ENCODE measurements at regions of chr2 and their contacts with region 1.

Region 1: GRCh38 chr2:60581433-60582282 is 28.2 kb upstream of the BCL11A start:
- DNase-seq: peak; percentile 73
- ATAC-seq: peak; percentile 96
- H3K4me3 Mint-ChIP-seq: no peak overlapping the region
- H3K27ac Mint-ChIP-seq: no peak overlapping the region
- H3K4me1 Mint-ChIP-seq: peaks cover 2% of the 10 kb centered on the region
- H3K27me3 Mint-ChIP-seq: peaks cover 28% of the 10 kb centered on the region

Region 2: GRCh38 chr2:60079562-60079961 is 502.1 kb before region 1 on chr2:
- CTCF ChIA-PET with region 1: no interaction called
- POLR2A ChIA-PET with region 1: no interaction called
- DNase-seq: no peak
- ATAC-seq: no peak
- H3K4me3 Mint-ChIP-seq: no peak overlapping the region
- H3K27ac Mint-ChIP-seq: no peak overlapping the region
- H3K4me1 Mint-ChIP-seq: no peaks in the 10 kb centered on the region
- H3K27me3 Mint-ChIP-seq: no peaks in the 10 kb centered on the region

Region 3: DNA sequence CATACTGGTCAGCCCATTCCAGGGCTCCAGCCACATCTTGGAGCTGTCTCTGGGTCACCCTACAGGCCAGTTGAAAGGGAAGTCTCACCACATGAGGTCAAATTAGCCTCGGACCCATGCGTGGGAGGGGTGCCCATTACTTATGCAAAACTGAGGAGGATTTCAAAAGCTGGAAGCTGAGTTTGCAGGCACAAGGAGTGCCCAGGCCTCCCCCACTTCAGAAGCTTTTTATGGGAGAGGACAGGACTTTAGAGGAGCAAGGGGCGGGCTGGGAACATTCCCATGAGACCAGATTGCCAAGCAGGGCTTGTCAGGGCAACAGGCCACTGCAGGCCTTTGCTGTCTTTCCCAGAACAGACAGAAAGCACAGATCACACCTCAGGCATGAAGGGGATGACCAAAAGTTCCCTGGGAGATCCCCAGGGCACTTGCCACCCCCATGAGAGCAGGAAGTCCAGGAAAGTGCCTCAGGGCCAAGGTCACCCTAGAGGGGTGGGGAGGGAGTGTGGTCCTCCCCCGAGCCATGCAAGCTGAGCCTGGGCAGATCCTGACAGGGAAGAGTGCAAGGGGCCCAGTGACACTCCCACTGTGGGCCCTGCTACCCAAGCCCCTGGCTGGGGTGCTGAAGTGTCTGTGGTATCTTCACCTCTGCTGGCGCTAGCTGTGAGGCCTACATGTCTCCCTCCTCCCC is 295.9 kb before region 1 on chr2:
- CTCF ChIA-PET with region 1: no interaction called
- POLR2A ChIA-PET with region 1: no interaction called
- DNase-seq: no peak
- ATAC-seq: no peak
- H3K4me3 Mint-ChIP-seq: no peak overlapping the region
- H3K27ac Mint-ChIP-seq: no peak overlapping the region
- H3K4me1 Mint-ChIP-seq: no peaks in the 10 kb centered on the region
- H3K27me3 Mint-ChIP-seq: peaks cover 3% of the 10 kb centered on the region

Region 4: DNA sequence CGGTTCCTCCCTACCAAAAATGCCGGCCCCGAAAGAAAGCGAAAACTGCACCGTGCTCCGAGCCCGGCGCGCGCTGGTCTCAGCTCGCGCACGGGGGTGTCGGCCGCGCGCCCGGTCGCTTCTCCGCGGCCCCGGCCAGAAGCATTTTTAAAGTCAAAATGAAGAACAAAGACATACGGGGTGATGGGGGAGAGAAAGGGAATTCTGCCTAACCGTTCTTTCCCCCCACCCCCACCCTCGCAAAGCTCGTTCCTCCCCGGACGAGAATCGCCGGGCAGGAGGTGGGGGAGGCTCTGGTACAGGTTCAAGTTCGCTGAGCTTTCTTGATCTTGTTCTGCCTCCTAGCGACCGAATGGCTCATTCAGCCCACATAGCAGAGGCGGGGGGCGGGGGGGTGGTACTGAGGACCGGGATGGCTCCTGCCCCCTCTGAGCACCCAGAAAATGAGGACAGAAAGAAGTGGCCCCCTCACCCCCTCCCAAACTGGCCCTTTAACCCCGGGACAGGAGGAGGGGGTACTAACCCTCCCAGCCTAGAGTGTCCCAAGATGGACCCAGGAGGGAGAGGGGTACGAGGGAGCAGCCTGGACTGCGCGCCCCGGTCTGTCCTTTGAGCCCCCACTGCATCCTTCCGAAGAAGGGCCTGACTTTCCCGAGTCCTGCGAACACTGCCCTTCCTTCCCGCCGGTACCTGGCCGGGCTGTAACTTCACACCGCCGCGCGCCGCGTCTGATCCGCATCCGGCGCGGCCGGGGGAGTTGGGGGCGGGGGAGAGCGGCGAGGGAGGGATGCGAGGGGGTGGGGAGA is 31.3 kb before region 1 on chr2:
- CTCF ChIA-PET with region 1: interaction called, 93 read pairs
- POLR2A ChIA-PET with region 1: no interaction called
- DNase-seq: peak; percentile 62
- ATAC-seq: peak; percentile 53
- H3K4me3 Mint-ChIP-seq: peak overlapping the region; percentile 81
- H3K27ac Mint-ChIP-seq: no peak overlapping the region
- H3K4me1 Mint-ChIP-seq: peaks cover 33% of the 10 kb centered on the region
- H3K27me3 Mint-ChIP-seq: peaks cover 68% of the 10 kb centered on the region

Region 5: GRCh38 chr2:60569680-60570111 is 12.0 kb before region 1 on chr2:
- CTCF ChIA-PET with region 1: interaction called, 25 read pairs
- POLR2A ChIA-PET with region 1: interaction called, 3 read pairs
- DNase-seq: no peak
- ATAC-seq: no peak
- H3K4me3 Mint-ChIP-seq: no peak overlapping the region
- H3K27ac Mint-ChIP-seq: no peak overlapping the region
- H3K4me1 Mint-ChIP-seq: peaks cover 3% of the 10 kb centered on the region
- H3K27me3 Mint-ChIP-seq: peaks cover 57% of the 10 kb centered on the region

Measured in activated CD8-positive, alpha-beta T cell treated with anti-CD3 and anti-CD28 coated beads, Interleukin-2, amount 10 ng/mL, durations not matched to agents 7 days and 5 days (primary cell).